ENCODE measurements at regions of chr17 and their contacts with region 1.

Region 1: DNA sequence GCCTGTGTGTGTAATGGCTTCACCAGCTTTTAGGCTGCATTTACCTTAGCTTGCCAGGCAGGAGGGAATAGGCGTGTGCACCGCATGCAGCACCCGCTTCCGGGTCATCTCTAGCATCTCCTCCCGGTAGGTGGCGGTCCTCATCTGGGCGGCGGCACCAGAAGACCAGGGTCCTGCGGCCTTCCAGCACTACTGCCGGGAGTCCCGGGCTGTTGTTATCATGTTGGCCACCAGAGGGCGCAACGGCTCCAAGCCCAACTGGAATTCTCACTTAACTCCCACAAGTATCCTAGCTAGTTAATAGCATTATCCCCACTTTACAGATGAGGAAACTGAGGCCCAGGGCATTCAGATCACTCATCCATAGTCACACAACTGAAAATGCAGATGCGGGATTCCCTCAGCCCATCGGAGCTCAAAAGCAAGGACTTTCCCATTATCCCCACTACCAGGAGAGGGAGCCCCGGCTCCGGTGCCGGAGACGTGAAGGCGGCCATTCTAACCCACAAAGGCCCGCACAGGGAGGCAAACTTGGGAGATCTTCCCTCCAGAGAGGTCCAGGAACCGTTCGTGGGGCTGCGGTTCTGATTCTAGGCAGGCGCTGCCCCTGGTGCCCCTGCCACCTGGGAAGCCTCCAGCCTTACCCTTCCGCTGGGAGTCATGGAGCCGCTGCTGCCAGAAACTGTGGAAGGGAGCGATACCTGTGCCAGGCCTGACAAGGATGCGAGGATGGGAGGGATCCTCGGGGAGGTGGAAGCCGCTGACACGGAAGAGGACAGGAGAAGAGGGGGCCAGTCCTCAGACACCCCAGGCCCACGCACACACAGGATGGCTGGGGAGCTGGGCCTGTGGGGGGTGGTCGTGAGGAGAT is 23.9 kb downstream of the LGALS9 start:
- H3K4me3 Mint-ChIP-seq: no peak overlapping the region
- H3K27ac Mint-ChIP-seq: no peak overlapping the region
- H3K4me1 Mint-ChIP-seq: peaks cover 4% of the 10 kb centered on the region
- H3K27me3 Mint-ChIP-seq: no peaks in the 10 kb centered on the region

Region 2: DNA sequence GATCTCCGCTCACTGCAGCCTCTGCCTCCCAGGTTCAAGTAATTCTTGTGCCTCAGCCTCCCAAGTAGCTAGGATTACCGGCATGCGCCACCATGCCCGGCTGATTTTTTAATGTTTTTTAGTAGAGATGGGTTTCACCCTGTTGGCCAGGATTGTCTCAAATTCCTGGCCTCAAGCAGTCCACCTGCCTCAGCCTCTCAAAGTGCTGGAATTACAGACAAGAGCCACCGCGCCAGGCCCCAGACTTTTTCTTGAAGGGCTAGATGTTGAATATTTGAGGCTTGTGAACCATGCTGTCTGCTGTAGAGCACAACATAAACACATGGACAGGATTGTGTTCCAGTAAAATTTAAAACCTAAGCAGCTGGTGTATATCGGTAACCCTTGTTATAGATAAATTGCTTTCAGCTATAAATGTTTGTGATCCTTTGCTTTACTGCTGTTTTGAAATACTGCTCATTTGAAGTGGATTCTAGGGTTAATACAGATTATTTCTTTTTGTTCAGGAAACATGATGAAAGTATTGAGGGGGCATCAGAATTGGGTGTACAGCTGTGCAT is 348.5 kb before region 1 on chr17:
- intact Hi-C with region 1: no loop called
- H3K4me3 Mint-ChIP-seq: no peak overlapping the region
- H3K27ac Mint-ChIP-seq: no peak overlapping the region
- H3K4me1 Mint-ChIP-seq: peaks cover 17% of the 10 kb centered on the region
- H3K27me3 Mint-ChIP-seq: no peaks in the 10 kb centered on the region

Region 3: DNA sequence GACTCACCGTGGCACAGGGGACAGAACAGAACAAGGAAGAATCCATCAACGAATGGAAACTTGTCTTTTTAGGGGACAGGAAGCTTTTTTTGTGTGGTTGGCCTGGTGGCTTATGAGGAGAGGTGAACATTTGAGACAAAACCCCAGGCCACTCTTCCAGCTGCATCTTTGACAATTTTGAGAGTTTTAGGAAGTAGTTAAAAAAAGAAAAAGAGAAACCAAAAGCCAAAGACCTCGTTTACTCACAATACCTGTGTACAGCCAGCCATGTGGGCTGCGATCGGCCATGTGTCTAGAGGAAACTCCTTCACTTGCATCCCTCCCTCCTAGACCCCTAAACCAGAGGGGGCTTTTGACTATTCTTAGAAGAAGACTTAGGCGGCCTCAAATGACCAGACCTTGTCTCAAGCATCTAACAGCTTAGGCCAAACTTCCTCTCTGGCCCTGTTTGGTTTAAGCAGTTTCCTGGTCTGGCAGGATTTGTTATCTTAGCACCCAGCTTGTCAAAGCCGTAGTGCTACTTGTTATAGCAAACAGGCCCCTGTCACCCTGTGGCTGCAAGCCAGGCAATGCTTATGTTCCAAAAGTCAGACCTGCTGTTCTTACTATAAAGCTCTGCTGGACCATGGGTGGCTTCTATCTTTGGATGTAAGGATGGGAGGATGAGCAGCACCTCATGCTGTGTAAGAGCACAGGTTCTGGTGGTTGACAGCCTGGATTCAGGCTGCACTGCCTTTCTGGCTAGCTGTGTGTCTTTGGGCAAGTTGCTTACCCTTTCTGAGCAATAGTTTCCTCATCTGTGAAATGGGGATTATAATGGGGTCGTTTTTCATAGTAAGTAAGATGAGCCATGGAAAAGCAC is 180.9 kb before region 1 on chr17:
- intact Hi-C with region 1: no loop called
- H3K4me3 Mint-ChIP-seq: peak overlapping the region; percentile 35
- H3K27ac Mint-ChIP-seq: peak overlapping the region; percentile 76
- H3K4me1 Mint-ChIP-seq: peaks cover 66% of the 10 kb centered on the region
- H3K27me3 Mint-ChIP-seq: no peaks in the 10 kb centered on the region

Region 4: DNA sequence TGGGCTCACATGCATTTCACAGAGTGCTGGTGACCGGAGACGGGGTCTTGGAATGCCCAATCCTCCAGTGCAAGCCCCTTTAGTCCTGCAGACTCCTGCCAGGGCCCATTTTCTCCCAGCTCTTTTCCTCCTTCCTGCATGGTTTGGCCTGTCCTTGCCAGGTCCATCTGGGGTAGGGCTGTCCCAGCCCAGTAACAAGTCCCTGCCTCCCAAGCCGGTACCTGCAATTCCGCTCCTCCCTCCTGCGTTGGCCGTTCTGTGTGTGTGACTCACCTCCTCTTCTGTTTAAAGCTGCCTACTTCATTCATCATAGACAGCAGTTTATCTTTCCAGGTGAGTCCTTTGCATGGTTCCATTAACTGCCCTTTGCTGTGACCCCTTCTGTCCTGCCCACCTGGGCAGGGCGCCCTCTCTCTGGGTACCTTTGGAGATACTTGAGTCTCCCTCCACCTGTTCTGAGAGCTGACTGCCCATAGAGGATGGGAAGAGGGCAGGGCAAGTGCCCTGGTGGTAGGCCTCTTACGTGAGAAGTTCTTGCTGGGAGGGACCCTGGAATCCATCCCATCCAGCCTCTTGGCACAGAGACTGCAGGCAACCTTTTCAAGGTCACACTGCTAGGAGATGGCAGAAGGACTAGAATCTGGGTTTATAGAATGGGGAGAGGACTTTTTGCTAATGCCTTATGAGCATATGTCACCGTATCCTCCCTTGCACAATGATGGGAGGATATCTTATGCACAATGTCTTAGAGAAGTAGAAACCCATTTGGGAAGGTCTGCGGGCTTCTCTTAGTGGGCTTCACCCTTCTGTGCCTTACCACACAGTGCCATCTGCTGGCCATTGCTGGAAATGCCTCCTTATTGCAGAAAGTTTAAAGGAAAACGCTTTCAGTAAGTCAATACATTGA is 53.6 kb before region 1 on chr17:
- intact Hi-C with region 1: loop called (anchors 1 kb)
- H3K4me3 Mint-ChIP-seq: no peak overlapping the region
- H3K27ac Mint-ChIP-seq: no peak overlapping the region
- H3K4me1 Mint-ChIP-seq: peaks cover 5% of the 10 kb centered on the region
- H3K27me3 Mint-ChIP-seq: no peaks in the 10 kb centered on the region

Region 5: DNA sequence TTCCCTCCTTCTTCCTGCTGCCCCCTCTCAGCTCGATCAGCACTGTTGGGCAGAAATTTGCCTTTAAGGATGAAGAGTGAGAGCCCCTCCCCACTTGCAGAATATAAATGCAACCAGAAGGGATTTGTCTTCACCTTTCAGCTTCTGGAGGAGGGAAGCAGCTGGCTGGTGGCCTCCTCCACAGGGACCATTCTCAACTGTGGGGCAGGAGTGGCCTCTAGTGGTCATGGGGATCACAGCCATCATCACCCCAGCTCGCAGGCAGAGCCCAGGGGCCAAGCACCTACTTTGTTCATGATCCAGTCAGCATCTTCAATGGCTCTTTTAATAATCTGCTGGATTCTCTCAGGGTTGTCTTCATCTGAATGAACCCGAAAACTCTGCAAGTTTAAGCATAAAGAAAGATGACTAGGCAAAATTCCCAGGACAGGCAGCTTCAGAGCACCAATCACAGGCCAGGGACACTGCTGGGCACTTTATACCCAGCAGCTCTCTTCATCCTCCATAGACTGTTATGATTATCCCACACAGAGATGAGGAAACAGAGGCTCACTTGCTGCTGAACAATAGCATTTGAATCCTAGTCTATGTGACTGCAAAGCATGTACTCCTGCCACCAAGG is 225.2 kb after region 1 on chr17:
- intact Hi-C with region 1: loop called (anchors 5 kb)
- H3K4me3 Mint-ChIP-seq: no peak overlapping the region
- H3K27ac Mint-ChIP-seq: no peak overlapping the region
- H3K4me1 Mint-ChIP-seq: no peaks in the 10 kb centered on the region
- H3K27me3 Mint-ChIP-seq: no peaks in the 10 kb centered on the region

Measured in dendritic cell treated with granulocyte-macrophage colony-stimulating factor and Interleukin-4, amounts not matched to agents 40 ng/mL and 50 ng/mL, for 4 days (primary cell).